Heart left ventricle (tissue), 16 donors: ENCODE measurements at regions of chr2 and their contacts with region 1.

Region 1: DNA sequence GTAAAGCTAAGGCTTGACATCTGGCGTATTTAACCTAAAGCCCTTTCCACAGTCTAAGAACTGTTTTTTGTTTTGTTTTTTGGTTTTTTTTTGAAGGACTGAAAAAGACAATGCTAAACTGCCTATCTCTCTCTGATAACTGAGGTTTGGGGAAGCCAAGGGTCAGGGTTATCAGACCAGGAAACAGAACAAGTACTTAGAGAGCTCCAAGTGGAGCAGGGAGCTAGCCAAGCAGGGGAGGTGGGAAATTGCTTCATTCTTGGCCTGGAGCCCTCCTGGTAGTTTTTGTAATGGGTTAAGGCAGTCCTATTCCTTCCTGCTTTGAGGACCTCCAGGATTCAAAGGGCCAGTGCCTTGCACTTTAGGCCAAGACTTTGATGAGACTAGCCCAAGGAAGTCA is 154.3 kb upstream of the LTBP1 start:
- DNase-seq: peak in 4 of 5 donors; percentile 48 to 65 (median 60)
- ATAC-seq: peak; percentile 79 to 94 (median 92)
- H3K4me3 ChIP-seq: no peak overlapping the region
- H3K27ac ChIP-seq: peak overlapping the region in 6 of 12 donors; percentile 0 to 57 (median 14)
- H3K4me1 ChIP-seq: peaks cover 0 to 33% (median 24%) of the 10 kb centered on the region in 12 donors
- H3K27me3 ChIP-seq: no peaks in the 10 kb centered on the region
- CTCF ChIP-seq: no peak
- POLR2A ChIP-seq: no peak

Region 2: GRCh38 chr2:32824070-32824809 is 31.8 kb after region 1 on chr2:
- intact Hi-C with region 1: loop called in 1 of 10 experiments (anchors 5 kb)
- DNase-seq: no peak
- ATAC-seq: peak; percentile 15 to 71 (median 64)
- H3K4me3 ChIP-seq: no peak overlapping the region
- H3K27ac ChIP-seq: peak overlapping the region; percentile 42 to 78 (median 70)
- H3K4me1 ChIP-seq: peaks cover 0 to 39% (median 20%) of the 10 kb centered on the region in 12 donors
- H3K27me3 ChIP-seq: no peaks in the 10 kb centered on the region
- CTCF ChIP-seq: no peak
- POLR2A ChIP-seq: no peak

Region 3: GRCh38 chr2:32838418-32838817 is 46.0 kb after region 1 on chr2:
- intact Hi-C with region 1: loop called in 1 of 10 experiments (anchors 5 kb)
- DNase-seq: peak in 1 of 5 donors; percentile 25
- ATAC-seq: peak in 1 of 4 donors; percentile 21
- H3K4me3 ChIP-seq: no peak overlapping the region
- H3K27ac ChIP-seq: peak overlapping the region in 1 of 12 donors; percentile 14
- H3K4me1 ChIP-seq: peaks cover 0 to 33% (median 4%) of the 10 kb centered on the region in 12 donors
- H3K27me3 ChIP-seq: no peaks in the 10 kb centered on the region
- CTCF ChIP-seq: no peak
- POLR2A ChIP-seq: no peak

Region 4: DNA sequence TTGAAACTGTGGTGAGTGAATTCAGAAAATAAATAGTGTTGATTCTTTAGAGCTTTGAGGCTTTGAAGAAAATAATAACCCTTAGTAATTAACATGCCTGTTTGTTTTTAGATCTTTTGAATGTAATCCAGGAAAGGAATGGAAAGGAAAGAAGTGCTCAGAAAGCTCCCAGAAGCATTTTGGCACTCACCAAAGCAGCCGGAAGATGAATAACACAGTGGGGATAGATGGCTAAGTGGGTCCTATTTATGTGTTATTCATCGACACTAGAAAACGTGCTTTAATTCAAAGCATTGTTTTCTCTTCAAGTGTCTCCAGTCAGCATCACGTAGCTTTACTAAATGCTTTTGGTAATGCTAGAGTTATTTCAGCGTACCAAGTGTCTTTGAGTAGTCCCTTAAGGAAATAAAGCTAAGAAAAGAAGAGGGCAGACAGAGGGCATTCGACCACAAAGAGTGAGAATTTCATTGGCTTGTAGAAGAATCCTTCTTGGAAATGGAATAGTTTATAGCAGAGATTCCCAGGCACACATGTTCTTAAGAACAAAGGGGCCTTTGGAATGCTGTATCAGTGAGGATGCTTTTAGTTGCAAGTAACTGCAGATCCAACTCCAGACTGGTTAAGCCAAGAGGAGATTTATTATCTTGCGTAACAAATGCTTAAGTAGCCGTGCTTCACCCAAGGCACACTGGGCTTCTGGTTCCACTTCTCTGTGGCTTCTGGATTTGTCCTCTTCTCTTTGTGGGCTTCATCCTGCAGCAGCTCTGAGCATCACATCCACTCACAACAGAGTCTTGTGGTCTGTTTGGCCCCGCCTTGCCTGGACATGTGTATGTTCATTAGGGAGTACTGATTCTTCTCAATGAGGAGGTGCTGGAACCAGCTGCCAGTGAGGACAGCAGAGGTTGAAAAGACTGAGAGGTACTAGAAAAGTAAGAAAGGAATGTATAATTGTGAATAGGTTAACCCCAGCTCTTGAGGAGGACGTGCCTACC is 90.7 kb after region 1 on chr2:
- intact Hi-C with region 1: loop called in 1 of 10 experiments (anchors 10 kb)
- DNase-seq: no peak
- ATAC-seq: no peak
- H3K4me3 ChIP-seq: no peak overlapping the region
- H3K27ac ChIP-seq: no peak overlapping the region
- H3K4me1 ChIP-seq: peaks cover 0 to 7% (median 6%) of the 10 kb centered on the region in 12 donors
- H3K27me3 ChIP-seq: no peaks in the 10 kb centered on the region
- CTCF ChIP-seq: no peak
- POLR2A ChIP-seq: no peak

Region 5: DNA sequence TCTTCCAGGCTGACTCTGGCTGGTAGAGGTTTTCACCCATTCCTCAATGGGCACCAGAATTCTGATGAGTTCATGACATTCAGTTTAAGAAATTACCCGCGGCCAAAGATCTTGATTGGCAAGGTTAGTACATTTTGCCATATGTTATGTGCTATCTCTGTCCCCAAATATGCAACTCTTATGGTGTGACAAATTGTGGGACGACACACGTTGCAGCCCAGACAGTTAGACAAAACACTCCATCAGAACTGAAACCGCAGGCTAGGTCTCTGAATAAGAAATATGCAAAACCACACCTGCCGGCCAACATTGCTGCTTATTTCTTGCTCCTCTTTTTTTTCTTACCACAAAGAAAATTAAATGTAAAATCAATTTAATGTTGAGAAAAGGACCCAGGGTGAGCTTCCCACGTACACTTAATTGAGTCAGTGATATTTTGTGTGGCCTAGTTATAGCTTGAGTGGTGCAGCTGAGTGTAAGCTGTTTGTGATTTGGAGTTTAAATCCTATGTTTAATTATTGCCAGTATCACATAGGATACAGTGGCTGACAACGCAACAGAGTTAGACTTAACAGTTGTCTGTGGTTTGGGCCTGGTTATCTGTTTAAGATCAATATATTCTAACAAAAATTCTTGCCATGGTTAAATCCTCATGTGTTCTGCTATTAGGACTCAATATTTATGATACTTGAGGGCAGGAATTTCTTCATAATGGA is 118.6 kb after region 1 on chr2:
- intact Hi-C with region 1: no loop called
- DNase-seq: no peak
- ATAC-seq: no peak
- H3K4me3 ChIP-seq: no peak overlapping the region
- H3K27ac ChIP-seq: no peak overlapping the region
- H3K4me1 ChIP-seq: no peaks in the 10 kb centered on the region
- H3K27me3 ChIP-seq: no peaks in the 10 kb centered on the region
- CTCF ChIP-seq: no peak
- POLR2A ChIP-seq: no peak

Region 6: GRCh38 chr2:33077844-33078243 is 285.4 kb after region 1 on chr2:
- intact Hi-C with region 1: no loop called
- DNase-seq: no peak
- ATAC-seq: no peak
- H3K4me3 ChIP-seq: no peak overlapping the region
- H3K27ac ChIP-seq: no peak overlapping the region
- H3K4me1 ChIP-seq: peaks cover 0 to 7% (median 0%) of the 10 kb centered on the region in 12 donors
- H3K27me3 ChIP-seq: no peaks in the 10 kb centered on the region
- CTCF ChIP-seq: no peak
- POLR2A ChIP-seq: no peak

Region 7: GRCh38 chr2:33521791-33522281 is 729.4 kb after region 1 on chr2:
- intact Hi-C with region 1: no loop called
- DNase-seq: peak in 3 of 5 donors; percentile 18 to 36 (median 28)
- ATAC-seq: peak; percentile 48 to 73 (median 61)
- H3K4me3 ChIP-seq: no peak overlapping the region
- H3K27ac ChIP-seq: peak overlapping the region in 4 of 12 donors; percentile 4 to 62 (median 28)
- H3K4me1 ChIP-seq: peaks cover 0 to 25% (median 13%) of the 10 kb centered on the region in 12 donors
- H3K27me3 ChIP-seq: no peaks in the 10 kb centered on the region
- CTCF ChIP-seq: no peak
- POLR2A ChIP-seq: no peak